Tibial artery (tissue), 4 donors: ENCODE measurements at regions of chr1 and their contacts with region 1.

Region 1: DNA sequence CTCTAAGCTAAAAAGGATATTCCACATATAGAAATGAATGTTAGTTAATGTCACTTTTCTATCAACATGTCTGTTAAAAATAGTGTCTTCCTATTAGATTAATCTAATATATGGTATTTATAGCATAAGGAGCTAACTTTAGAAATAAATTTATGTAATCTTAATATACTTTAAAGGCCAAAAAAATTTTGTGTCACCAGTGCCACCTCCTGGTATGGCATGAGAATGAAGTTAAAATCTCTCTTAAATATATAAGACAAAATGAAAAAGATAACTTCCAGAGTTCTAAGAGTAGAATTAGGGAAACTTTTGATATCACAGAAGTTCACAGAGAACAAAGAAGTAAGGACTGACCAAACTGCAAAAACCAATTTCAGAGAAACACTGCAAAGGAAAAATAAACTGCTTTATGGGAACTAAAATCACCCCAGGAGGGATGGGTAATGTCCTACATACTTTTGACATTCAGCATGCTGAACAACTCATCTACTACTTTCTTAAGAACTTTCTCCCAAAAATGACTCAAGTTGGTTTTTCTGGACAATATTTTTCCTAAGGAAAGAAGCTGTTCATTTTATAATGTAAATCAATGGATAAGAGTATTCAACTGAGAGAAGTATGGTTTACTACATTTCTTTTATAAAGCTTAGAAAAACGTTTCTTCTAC is 82.8 kb downstream of the TRIM33 start:
- DNase-seq: no peak
- H3K4me3 ChIP-seq: no peak overlapping the region
- H3K27ac ChIP-seq: no peak overlapping the region
- H3K4me1 ChIP-seq: no peaks in the 10 kb centered on the region
- H3K27me3 ChIP-seq: no peaks in the 10 kb centered on the region
- CTCF ChIP-seq: peak; percentile 44 to 59

Region 2: DNA sequence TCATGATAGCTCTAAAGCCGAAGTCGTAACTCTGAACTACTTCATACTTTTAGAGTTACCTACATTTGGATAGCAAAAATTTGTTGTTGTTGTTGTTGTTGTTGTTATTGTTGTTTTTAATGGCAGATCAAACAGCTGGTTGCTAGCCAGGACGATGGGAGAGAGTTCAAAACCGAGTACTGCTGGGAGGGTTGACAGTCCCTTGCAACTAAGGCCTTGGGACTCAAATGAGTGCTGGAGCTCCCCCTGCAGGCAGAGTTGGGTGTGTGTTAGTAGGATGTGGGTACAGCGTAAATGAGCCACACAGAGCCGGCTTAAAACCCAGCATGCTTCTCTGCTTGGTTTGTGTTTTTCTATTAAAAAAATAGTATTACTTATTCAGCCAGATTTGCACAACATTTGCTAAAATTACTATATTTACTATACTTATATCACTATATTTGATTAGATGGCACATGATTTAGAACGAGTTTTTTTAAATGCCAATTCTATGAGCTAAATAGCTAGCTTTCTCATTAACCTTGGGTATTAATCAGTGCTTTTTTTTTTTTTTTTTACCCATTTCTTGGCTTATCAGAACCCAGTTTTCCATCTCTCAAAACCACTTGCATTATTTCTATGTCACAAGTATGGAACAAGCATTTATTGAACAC is 145.3 kb before region 1 on chr1:
- intact Hi-C with region 1: no loop called
- DNase-seq: peak; percentile 89 to 92
- H3K4me3 ChIP-seq: no peak overlapping the region
- H3K27ac ChIP-seq: no peak overlapping the region
- H3K4me1 ChIP-seq: no peaks in the 10 kb centered on the region
- H3K27me3 ChIP-seq: no peaks in the 10 kb centered on the region
- CTCF ChIP-seq: peak; percentile 81 to 84

Region 3: DNA sequence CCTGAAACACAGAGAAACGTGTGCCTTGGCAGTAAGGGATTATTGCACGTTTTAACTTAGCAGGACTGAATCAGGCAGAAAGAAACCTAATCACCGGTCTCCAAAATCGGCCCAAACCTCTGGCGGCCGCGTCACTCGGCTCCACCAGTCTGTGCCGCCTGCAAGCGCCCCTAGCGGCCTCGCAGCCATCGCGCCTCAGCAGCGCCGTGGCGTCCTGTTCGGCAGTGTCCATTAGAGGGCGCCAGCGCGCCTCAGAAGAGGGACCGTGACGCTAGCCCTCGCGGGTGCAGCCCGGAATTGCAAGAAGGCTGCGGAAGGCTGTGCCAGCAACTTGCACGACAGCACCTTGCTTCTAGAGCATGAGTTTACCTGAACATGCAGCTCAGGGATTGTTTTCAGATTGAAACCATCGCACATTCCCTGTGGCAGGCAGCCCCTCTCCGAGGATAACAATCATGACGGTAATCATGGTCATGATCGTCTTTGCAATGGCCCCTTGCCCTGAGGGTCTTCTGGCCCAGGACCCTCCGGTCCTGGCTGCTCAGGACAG is 81.7 kb before region 1 on chr1:
- intact Hi-C with region 1: loop called (anchors 1 kb)
- DNase-seq: peak; percentile 94 to 97
- H3K4me3 ChIP-seq: peak overlapping the region; percentile 50 to 64
- H3K27ac ChIP-seq: peak overlapping the region; percentile 92 to 94
- H3K4me1 ChIP-seq: peaks cover 0 to 11% (median 8%) of the 10 kb centered on the region in 4 donors
- H3K27me3 ChIP-seq: no peaks in the 10 kb centered on the region
- CTCF ChIP-seq: peak; percentile 100

Region 4: DNA sequence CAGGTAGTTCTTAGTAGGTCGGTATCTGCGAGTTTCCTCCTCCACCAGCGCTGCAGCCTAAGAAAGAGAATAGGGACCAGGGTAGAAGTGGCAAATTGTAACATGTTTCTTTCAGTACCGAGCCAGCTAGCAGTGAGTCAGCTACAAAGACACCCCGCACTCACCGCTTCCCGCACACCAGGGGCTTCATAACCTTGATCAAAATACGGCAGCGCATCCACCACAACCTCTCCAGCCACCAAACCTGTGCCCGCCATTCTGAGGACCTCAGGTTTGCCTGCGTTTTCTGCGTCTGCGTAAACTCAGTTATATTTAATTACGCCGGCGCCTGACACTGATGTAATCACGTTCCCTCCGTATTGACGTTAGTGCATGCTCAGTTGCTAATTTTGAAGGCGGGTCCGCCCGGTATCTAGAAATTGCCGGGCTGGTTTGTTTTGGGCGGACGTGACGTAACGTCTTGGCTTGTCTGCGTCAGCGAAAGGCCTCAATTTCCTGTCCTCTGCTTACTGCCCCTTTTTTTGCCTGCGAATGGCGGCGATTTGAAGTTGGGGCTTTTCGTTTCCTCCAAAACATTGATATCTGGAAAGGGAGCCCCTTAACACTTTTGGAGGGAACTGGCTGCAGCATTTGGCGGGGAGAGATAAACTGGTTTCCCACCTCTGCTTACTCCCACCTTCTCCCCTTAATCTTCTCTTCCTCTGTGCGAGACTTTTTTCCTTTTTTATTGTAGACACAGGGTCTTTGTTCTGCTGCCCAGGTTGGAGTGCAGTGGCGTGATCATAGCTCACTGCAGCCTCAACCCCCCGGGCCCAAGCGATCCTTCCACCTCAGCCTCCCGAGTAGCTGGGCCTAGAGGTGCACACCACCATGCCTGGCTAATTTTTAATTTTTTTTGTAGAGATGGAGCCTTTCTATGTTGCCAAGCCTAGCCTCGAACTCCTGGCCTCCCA is 153.4 kb after region 1 on chr1 and contains the start of gene BCAS2:
- intact Hi-C with region 1: no loop called
- DNase-seq: peak; percentile 98 to 99
- H3K4me3 ChIP-seq: peak within 1 kb of the TSS; percentile 65 to 78
- H3K27ac ChIP-seq: peak within 1 kb of the TSS; percentile 87 to 89
- H3K4me1 ChIP-seq: peaks cover 0 to 36% (median 23%) of the 10 kb centered on the region in 4 donors
- H3K27me3 ChIP-seq: no peaks in the 10 kb centered on the region
- CTCF ChIP-seq: no peak